Heart right ventricle (tissue), 16 donors: ENCODE measurements at regions of chr13 and their contacts with region 1.

Region 1: DNA sequence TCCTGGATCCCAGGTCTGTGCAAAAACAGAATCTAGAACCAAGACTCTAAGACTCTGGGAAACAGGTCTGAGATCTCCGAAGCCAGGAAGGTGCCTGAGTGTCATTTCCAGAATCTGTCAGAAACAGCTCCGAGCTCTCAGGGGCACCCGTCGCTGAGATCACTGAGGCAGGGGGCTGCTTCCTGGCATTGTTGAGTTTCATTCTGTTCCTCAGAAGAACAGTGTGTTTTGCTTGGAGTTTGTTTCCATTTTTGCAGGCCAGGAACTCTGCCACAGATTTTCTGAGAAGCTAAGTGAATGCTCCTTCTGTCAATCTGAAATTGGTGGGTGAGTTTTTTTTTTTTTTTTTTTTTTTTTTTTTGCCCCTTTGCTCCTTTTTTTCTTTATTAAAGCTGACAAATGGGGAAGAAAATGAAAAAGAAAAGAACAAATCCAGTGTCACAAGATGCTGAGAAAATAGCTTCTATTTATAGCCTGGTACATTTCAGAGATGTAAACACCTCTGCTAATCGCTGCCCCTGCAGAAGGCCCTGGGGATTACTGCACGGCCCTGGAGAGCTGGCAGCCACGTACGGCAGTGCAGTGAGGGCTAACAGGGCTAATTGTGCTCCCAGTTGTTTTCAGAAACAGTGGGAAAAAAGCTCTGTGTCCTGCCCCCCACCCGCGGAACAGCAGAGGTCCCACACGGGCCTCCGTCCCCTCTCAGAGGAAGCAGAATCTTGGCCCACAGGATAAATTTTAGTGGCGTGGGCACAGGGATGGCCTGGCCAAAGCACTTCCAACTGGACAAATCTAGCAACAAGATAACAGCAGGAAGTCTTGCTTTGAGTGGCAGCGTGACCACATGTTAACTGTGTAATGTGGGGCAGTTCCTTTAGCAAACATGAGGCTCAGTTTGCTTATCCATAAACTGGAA is 237.6 kb upstream of the IRS2 start:
- DNase-seq: peak; percentile 29 to 47
- ATAC-seq: peak; percentile 67 to 98 (median 93)
- H3K4me3 ChIP-seq: no peak overlapping the region
- H3K27ac ChIP-seq: peak overlapping the region in 9 of 10 donors; percentile 46 to 87 (median 70)
- H3K4me1 ChIP-seq: peaks cover 0 to 16% (median 7%) of the 10 kb centered on the region in 9 donors
- H3K27me3 ChIP-seq: no peaks in the 10 kb centered on the region
- CTCF ChIP-seq: no peak

Region 2: GRCh38 chr13:109998726-109999533 is 25.1 kb before region 1 on chr13:
- intact Hi-C with region 1: no loop called
- DNase-seq: no peak
- ATAC-seq: peak in 5 of 8 donors; percentile 23 to 43 (median 37)
- H3K4me3 ChIP-seq: no peak overlapping the region
- H3K27ac ChIP-seq: no peak overlapping the region
- H3K4me1 ChIP-seq: peaks cover 0 to 17% (median 0%) of the 10 kb centered on the region in 9 donors
- H3K27me3 ChIP-seq: peaks cover 0 to 9% (median 5%) of the 10 kb centered on the region in 7 donors
- CTCF ChIP-seq: peak in 3 of 9 donors; percentile 7 to 36 (median 16)

Region 3: GRCh38 chr13:110047496-110047895 is 23.5 kb after region 1 on chr13:
- intact Hi-C with region 1: loop called in 1 of 10 experiments (anchors 1 kb)
- DNase-seq: peak; percentile 58 to 90
- ATAC-seq: peak; percentile 97 to 100 (median 99)
- H3K4me3 ChIP-seq: no peak overlapping the region
- H3K27ac ChIP-seq: peak overlapping the region in 4 of 10 donors; percentile 17 to 27 (median 20)
- H3K4me1 ChIP-seq: peaks cover 0 to 20% (median 12%) of the 10 kb centered on the region in 9 donors
- H3K27me3 ChIP-seq: peaks cover 0 to 8% (median 0%) of the 10 kb centered on the region in 7 donors
- CTCF ChIP-seq: no peak